Activated CD4-positive, alpha-beta T cell treated with anti-CD3 and anti-CD28 coated beads, Interleukin-2, amount 10 ng/mL, durations not matched to agents 24 days and 14 days (primary cell): ENCODE measurements at regions of chr1 and their contacts with region 1.

Region 1: GRCh38 chr1:23619299-23620188 is 60.2 kb upstream of the ID3 start:
- DNase-seq: peak; percentile 90
- H3K4me3 Mint-ChIP-seq: peak overlapping the region; percentile 82
- H3K27ac Mint-ChIP-seq: peak overlapping the region; percentile 66
- H3K4me1 Mint-ChIP-seq: peaks cover 64% of the 10 kb centered on the region
- H3K27me3 Mint-ChIP-seq: no peaks in the 10 kb centered on the region

Region 2: DNA sequence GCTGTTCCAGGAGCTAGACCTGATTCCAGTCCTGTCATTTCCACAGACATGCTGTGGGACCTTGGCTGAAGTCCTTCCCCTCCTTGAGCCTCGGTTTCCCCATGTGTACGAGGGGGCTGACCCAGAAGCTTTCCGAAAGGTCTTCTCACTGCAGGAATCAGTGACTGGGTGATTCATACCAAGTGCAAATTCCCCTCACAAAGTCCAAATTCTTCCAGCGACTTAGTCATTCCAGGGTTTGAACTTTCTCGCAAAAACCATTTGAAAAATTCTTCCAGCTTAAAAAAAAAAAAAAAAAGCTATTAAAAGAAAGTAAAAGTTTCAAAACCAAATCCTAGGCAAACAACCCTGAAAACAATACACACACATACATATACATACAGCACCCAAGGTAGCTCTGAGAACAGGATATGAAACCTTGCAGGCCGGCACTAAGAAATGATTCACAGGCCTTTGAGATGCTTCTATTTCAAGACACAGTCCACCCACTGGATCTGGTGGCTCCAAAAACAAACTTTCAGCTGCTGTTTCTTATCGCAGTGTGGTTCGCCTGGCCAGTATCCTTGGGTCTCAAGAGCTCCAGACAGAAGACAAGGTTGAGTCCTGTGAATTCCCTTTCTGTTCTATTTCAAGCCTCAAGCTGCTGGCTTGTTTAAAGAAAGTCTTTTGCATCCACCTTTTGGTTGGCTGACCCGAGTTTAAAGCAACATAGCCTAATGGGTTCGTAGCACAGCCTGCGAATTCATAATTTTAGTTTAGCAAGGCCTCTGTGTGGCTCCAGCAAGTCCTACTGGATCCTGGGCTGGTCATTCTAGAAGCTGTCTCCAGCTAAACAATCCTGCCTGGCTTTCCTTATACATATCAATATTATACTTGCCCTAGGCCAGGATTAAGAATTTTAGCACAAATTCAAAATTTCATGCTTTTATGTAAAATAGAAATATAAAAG is 42.2 kb before region 1 on chr1:
- intact Hi-C with region 1: loop called (anchors 5 kb)
- DNase-seq: peak; percentile 84
- H3K4me3 Mint-ChIP-seq: peak overlapping the region; percentile 62
- H3K27ac Mint-ChIP-seq: peak overlapping the region; percentile 80
- H3K4me1 Mint-ChIP-seq: peaks cover 23% of the 10 kb centered on the region
- H3K27me3 Mint-ChIP-seq: no peaks in the 10 kb centered on the region

Region 3: GRCh38 chr1:23591460-23592208 is 27.9 kb before region 1 on chr1:
- intact Hi-C with region 1: loop called (anchors 2 kb)
- DNase-seq: peak; percentile 74
- H3K4me3 Mint-ChIP-seq: peak overlapping the region; percentile 72
- H3K27ac Mint-ChIP-seq: peak overlapping the region; percentile 90
- H3K4me1 Mint-ChIP-seq: peaks cover 58% of the 10 kb centered on the region
- H3K27me3 Mint-ChIP-seq: no peaks in the 10 kb centered on the region

Region 4: GRCh38 chr1:23634842-23635651 is 15.5 kb after region 1 on chr1:
- intact Hi-C with region 1: loop called (anchors 2 kb)
- DNase-seq: peak; percentile 91
- H3K4me3 Mint-ChIP-seq: peak overlapping the region; percentile 20
- H3K27ac Mint-ChIP-seq: peak overlapping the region; percentile 62
- H3K4me1 Mint-ChIP-seq: peaks cover 24% of the 10 kb centered on the region
- H3K27me3 Mint-ChIP-seq: no peaks in the 10 kb centered on the region